Prostate gland (tissue), 2 donors: ENCODE measurements at regions of chr10 and their contacts with region 1.

Region 1: GRCh38 chr10:58334817-58335305 is at the start of gene UBE2D1:
- DNase-seq: peak; percentile 85
- H3K4me3 ChIP-seq: peak within 1 kb of the TSS; percentile 85 to 92
- H3K27ac ChIP-seq: peak within 1 kb of the TSS; percentile 76 to 83
- H3K4me1 ChIP-seq: no peaks in the 10 kb centered on the region
- H3K27me3 ChIP-seq: no peaks in the 10 kb centered on the region
- CTCF ChIP-seq: peak in 1 of 4 experiments; percentile 15
- POLR2A ChIP-seq: peak; percentile 73
- total RNA-seq, gene UBE2D1: 9.8 to 11.4 TPM

Region 2: DNA sequence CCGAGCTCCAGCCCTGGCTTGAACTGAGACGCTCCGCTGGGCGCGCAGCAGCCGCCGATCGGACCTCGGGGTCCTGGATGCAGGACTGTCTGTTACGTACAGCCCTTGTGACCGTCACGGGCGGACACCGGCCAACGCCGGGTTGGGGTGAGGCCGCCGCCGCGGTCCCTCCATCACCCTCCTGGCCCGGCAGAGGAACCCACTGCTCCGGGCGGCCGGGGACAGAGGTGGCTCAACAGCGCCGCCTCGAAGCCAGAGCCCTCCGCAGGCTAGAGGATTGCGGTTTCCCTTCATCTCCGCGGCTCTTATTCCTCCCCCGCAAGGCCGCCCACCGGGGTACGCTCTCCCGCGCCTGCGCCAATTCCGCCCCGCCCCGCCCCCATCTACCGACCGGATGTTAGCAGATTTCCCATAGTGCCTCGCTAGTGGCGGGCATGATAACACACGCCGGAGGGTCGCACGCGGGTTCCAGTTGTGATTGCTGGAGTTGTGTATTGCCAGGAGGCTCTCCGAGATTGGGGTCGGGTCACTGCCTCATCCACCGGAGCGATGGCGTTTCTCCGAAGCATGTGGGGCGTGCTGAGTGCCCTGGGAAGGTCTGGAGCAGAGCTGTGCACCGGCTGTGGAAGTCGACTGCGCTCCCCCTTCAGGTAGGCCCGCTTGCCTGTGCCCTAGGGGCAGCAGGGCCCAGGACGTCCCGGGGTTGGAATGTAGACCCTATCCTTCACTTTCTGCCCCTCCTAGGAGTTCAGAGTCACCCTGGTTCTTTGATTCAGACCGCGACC is 50.3 kb after region 1 on chr10 and contains the start of gene TFAM:
- intact Hi-C with region 1: loop called (anchors 10 kb)
- DNase-seq: peak; percentile 89
- H3K4me3 ChIP-seq: peak within 1 kb of the TSS; percentile 58 to 72
- H3K27ac ChIP-seq: peak within 1 kb of the TSS; percentile 88 to 93
- H3K4me1 ChIP-seq: no peaks in the 10 kb centered on the region
- H3K27me3 ChIP-seq: no peaks in the 10 kb centered on the region
- CTCF ChIP-seq: peak; percentile 5 to 52 (median 44)
- POLR2A ChIP-seq: peak; percentile 68
- total RNA-seq, gene TFAM: 21.0 to 24.4 TPM